PC-3 (cell line): ENCODE measurements at regions of chr14 and their contacts with region 1.

Region 1: DNA sequence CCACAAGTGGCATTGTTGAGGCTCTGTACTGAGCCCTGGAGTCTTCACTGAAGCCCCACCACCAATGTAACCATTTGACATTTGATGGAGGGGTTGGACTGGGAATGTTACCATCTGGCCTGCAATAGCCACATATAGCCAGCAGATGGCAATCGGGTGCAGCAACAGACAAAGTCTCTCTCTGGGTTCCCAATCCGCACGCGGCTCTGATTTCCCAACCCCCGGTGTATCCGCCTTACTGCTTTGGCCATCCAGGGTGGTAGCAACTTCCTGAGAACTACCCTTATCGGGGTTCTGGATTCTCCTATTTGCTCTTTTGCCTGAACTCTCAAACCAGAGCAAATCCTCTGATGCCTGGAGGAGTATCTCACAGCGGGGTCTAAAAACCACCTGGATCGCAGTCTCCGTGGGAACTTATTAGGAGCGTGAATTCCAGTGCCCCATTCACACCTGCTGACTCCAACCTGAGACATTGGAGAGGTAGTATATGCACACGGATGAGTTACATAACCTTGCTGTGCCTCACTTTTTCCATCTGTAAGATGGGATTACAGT is 14.2 kb downstream of the VRTN start:
- DNase-seq: peak; percentile 85
- ATAC-seq: peak; percentile 84
- H3K4me3 ChIP-seq: no peak overlapping the region
- H3K27ac ChIP-seq: no peak overlapping the region
- H3K4me1 ChIP-seq: no peaks in the 10 kb centered on the region
- H3K27me3 ChIP-seq: no peaks in the 10 kb centered on the region
- CTCF ChIP-seq: peak; percentile 93

Region 2: GRCh38 chr14:74478996-74479635 is 116.7 kb after region 1 on chr14:
- CTCF ChIA-PET with region 1: no interaction called
- POLR2A ChIA-PET with region 1: no interaction called
- intact Hi-C with region 1: loop called (anchors 1 kb)
- DNase-seq: peak; percentile 48
- ATAC-seq: peak; percentile 71
- H3K4me3 ChIP-seq: no peak overlapping the region
- H3K27ac ChIP-seq: no peak overlapping the region
- H3K4me1 ChIP-seq: no peaks in the 10 kb centered on the region
- H3K27me3 ChIP-seq: no peaks in the 10 kb centered on the region
- CTCF ChIP-seq: peak; percentile 87

Region 3: DNA sequence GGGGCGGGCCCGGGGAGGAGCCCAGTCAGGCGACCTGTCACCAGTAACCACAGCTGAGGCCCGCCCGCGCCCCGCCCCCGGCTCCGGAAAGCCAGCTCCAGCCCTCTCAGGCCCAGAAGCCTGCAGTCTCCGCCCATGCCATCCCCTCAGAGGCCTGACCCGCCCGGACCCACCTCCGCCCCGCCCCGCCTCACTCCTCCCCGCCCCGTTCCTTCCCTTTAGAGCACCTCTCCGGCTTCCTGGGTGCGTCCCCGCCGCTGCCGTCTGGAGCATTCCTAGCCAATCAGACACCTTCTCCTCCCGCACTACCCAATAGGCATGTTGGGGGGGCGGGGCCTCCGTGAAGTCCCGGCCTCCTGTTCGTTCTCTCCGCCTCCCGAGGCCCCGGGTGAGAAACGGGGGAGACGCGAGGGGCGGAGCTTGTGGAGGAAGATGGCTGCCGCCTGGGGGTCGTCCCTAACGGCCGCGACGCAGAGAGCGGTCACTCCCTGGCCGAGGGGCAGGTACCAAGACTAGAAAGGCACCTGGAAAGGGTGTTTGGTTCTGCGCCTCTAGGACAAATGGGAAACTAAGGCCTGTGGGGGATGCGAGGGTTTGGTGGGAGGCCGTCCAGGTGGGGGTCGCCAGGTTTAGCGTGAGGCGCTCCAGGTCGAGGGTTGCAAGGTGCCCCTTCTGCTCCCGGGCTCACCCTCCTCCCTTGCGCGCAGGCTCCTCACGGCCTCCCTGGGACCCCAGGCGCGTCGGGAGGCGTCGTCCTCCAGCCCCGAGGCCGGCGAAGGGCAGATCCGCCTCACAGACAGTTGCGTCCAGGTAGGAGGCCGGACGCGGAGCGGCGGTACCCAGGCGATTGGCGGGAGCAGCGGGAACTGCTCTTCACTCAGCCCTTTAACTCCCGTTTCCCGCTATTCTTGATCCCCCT is 131.2 kb after region 1 on chr14 and contains the start of gene ISCA2:
- CTCF ChIA-PET with region 1: no interaction called
- POLR2A ChIA-PET with region 1: no interaction called
- intact Hi-C with region 1: loop called (anchors 1 kb)
- DNase-seq: peak; percentile 99
- ATAC-seq: peak; percentile 89
- H3K4me3 ChIP-seq: peak within 1 kb of the TSS; percentile 93
- H3K27ac ChIP-seq: peak within 1 kb of the TSS; percentile 19; the same call in 1 of the 2 replicates
- H3K4me1 ChIP-seq: peaks cover 46% of the 10 kb centered on the region
- H3K27me3 ChIP-seq: no peaks in the 10 kb centered on the region
- CTCF ChIP-seq: no peak
- total RNA-seq, gene ISCA2: 30.1 and 32.3 TPM in 2 replicates

Region 4: DNA sequence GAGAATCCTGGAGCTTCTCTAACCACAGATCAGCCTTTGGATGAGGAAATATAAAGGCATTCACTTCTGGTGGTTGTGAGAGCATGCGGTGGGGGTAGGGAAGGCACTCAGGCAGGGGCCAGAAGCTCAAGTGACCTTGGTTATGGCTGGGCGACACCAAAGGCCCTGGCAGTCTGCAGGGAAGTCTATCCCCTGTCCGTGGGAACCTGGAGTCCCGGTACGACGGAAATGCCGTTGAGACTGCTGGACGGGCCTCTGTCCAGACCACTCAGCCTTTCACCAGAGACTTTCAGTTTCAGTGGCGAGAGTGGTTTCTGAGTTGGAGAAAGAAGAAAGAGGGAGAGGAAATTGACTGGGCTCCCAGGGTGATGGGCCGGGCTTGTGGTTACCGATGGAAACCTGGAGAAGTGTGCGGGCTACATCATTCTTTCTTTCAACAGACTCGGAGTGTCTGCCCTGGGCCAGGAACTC is 152.1 kb after region 1 on chr14:
- CTCF ChIA-PET with region 1: no interaction called
- POLR2A ChIA-PET with region 1: no interaction called
- intact Hi-C with region 1: no loop called
- DNase-seq: no peak
- ATAC-seq: no peak
- H3K4me3 ChIP-seq: no peak overlapping the region
- H3K27ac ChIP-seq: no peak overlapping the region
- H3K4me1 ChIP-seq: peaks cover 15% of the 10 kb centered on the region
- H3K27me3 ChIP-seq: no peaks in the 10 kb centered on the region
- CTCF ChIP-seq: no peak